ENCODE measurements at regions of chr12 and their contacts with region 1.

Region 1: GRCh38 chr12:125240717-125241116 is 175.5 kb downstream of the AACS start:
- DNase-seq: no peak
- H3K4me3 ChIP-seq: no peak overlapping the region
- H3K27ac ChIP-seq: no peak overlapping the region
- H3K4me1 ChIP-seq: peaks cover 2 to 12% (median 4%) of the 10 kb centered on the region in 4 experiments; a peak in 6 of 7 replicates
- H3K27me3 ChIP-seq: no peaks in the 10 kb centered on the region
- CTCF ChIP-seq: no peak
- EP300 ChIP-seq: no peak
- POLR2A ChIP-seq: no peak
- RAD21 ChIP-seq: no peak

Region 2: GRCh38 chr12:125228519-125229260 is 12.0 kb before region 1 on chr12:
- CTCF ChIA-PET with region 1: interaction called, 19 read pairs
- POLR2A ChIA-PET with region 1: interaction called, 3 read pairs
- DNase-seq: no peak
- H3K4me3 ChIP-seq: no peak overlapping the region
- H3K27ac ChIP-seq: no peak overlapping the region
- H3K4me1 ChIP-seq: peaks cover 0 to 4% (median 1%) of the 10 kb centered on the region in 4 experiments; a peak in 3 of 7 replicates
- H3K27me3 ChIP-seq: no peaks in the 10 kb centered on the region
- CTCF ChIP-seq: no peak
- EP300 ChIP-seq: no peak
- POLR2A ChIP-seq: no peak
- RAD21 ChIP-seq: no peak

Region 3: GRCh38 chr12:125255935-125256633 is 15.4 kb after region 1 on chr12:
- CTCF ChIA-PET with region 1: interaction called, 30 read pairs
- POLR2A ChIA-PET with region 1: no interaction called
- DNase-seq: no peak
- H3K4me3 ChIP-seq: no peak overlapping the region
- H3K27ac ChIP-seq: no peak overlapping the region
- H3K4me1 ChIP-seq: peaks cover 0 to 3% (median 1%) of the 10 kb centered on the region in 4 experiments; a peak in 2 of 7 replicates
- H3K27me3 ChIP-seq: no peaks in the 10 kb centered on the region
- CTCF ChIP-seq: no peak
- EP300 ChIP-seq: no peak
- POLR2A ChIP-seq: no peak
- RAD21 ChIP-seq: no peak

Region 4: GRCh38 chr12:125324861-125325490 is 84.3 kb after region 1 on chr12:
- CTCF ChIA-PET with region 1: interaction called, 43 read pairs
- POLR2A ChIA-PET with region 1: no interaction called
- DNase-seq: no peak
- H3K4me3 ChIP-seq: no peak overlapping the region
- H3K27ac ChIP-seq: no peak overlapping the region
- H3K4me1 ChIP-seq: peaks cover 5 to 10% (median 8%) of the 10 kb centered on the region in 4 experiments; a peak in 6 of 7 replicates
- H3K27me3 ChIP-seq: no peaks in the 10 kb centered on the region
- CTCF ChIP-seq: no peak
- EP300 ChIP-seq: no peak
- POLR2A ChIP-seq: no peak
- RAD21 ChIP-seq: no peak

Measured in H1 (cell line).